ENCODE measurements at regions of chr18 and their contacts with region 1.

Region 1: DNA sequence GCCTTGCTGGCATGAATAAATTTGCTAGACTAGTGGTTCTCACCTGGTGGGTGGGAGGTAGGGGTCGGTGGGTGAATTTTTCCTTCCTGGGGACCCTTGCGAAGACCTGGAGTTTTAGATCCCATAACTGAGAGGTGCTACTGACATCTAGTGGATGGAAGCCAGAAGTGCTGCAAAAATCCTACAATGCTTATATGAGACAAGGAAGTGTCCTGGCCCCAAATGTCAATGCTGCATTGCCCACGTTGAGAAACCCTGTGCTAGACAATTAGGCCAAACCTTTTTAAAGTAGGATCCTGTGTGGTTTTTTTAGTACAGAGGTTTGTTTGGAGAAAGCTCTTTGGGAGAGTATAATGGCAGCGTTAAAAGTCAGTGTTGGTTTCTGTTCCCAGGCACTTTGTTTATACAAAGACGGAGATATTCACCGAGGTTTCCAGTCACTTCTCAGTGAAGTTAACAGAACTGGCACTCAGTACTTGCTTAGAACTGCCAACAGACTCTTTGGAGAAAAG is 9.6 kb downstream of the SERPINB8 start:
- DNase-seq: peak; percentile 48
- ATAC-seq: peak; percentile 56
- H3K4me3 Mint-ChIP-seq: no peak overlapping the region
- H3K27ac Mint-ChIP-seq: no peak overlapping the region
- H3K4me1 Mint-ChIP-seq: peaks cover 17% of the 10 kb centered on the region
- H3K27me3 Mint-ChIP-seq: no peaks in the 10 kb centered on the region

Region 2: DNA sequence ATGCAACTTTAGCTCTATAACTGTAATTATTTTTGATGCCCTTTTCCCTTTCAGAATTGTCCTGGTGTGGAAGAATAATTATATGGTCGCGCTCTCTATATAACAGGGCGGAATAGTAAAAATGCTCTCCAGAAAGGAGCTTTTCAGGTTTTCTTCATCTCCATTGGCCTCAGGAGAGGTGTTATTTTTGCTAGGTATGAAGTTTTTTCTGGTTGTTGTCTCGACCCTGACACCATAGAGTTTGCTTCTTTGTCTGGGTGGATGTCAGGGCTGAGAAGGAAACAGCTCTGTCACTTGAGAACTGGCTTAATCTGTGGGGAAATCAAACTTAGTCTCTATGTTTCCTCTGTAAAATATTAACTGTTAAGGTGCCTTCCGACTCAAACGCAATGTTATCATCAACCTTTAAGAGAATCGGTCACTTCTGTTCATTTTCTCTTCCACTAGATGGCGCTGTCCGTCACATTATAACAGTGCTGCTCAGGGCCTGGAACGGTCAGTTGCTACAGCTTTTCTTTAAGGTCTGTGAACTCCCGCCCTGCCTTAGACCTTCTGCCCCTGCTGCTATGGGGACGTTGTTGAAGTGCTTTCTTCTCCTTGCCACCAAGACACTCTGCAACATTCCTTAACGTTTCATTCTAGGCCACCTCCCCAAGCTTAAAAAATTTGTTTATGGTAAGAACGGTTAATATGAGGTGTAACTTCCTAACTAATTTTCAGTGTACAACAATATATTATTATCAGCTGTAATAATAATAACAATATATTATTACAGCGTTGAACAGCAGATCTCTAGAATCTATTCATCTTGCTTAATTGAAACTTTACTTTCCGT is 461.1 kb before region 1 on chr18:
- CTCF ChIA-PET with region 1: interaction called, 6 read pairs
- POLR2A ChIA-PET with region 1: no interaction called
- intact Hi-C with region 1: loop called (anchors 1 kb)
- DNase-seq: peak; percentile 71
- ATAC-seq: peak; percentile 91
- H3K4me3 Mint-ChIP-seq: no peak overlapping the region
- H3K27ac Mint-ChIP-seq: no peak overlapping the region
- H3K4me1 Mint-ChIP-seq: peaks cover 4% of the 10 kb centered on the region
- H3K27me3 Mint-ChIP-seq: peaks cover 9% of the 10 kb centered on the region

Region 3: GRCh38 chr18:63823518-63824219 is 155.8 kb before region 1 on chr18:
- CTCF ChIA-PET with region 1: no interaction called
- POLR2A ChIA-PET with region 1: no interaction called
- intact Hi-C with region 1: loop called (anchors 1 to 2 kb)
- DNase-seq: peak; percentile 69
- ATAC-seq: no peak
- H3K4me3 Mint-ChIP-seq: no peak overlapping the region
- H3K27ac Mint-ChIP-seq: no peak overlapping the region
- H3K4me1 Mint-ChIP-seq: no peaks in the 10 kb centered on the region
- H3K27me3 Mint-ChIP-seq: peaks cover 7% of the 10 kb centered on the region

Region 4: GRCh38 chr18:63890950-63891304 is 88.5 kb before region 1 on chr18:
- CTCF ChIA-PET with region 1: no interaction called
- POLR2A ChIA-PET with region 1: no interaction called
- intact Hi-C with region 1: loop called (anchors 1 to 5 kb)
- DNase-seq: no peak
- ATAC-seq: no peak
- H3K4me3 Mint-ChIP-seq: no peak overlapping the region
- H3K27ac Mint-ChIP-seq: no peak overlapping the region
- H3K4me1 Mint-ChIP-seq: peaks cover 4% of the 10 kb centered on the region
- H3K27me3 Mint-ChIP-seq: peaks cover 21% of the 10 kb centered on the region

Region 5: DNA sequence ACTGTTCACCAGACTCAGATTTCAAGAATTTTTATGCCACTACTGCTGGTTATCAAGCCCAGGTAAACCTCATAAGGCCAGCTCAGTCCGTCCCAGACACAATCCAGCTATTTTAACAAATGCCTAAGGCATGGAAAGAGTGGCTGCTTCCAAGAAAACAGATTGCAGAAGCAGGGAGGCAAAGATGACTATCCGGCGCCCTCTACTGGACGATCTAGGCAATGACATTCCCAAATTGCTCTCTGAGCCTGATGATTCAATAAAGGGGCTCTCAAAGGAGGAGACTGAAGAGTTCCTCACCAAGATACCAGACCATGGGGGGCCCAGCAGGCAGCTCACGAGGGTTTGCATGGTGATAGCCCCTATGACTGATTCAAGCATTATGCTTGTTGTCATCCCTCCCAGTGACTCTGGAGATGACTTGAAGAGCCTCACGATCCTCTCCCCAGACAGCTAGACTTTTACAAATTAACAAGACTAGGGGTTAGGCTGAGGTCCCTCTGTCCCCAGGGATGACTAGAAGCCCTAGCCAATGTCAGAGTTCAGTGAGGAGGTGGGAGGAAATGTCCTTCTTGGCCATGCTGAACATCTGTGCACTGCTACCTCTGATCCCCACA is 15.4 kb after region 1 on chr18:
- CTCF ChIA-PET with region 1: interaction called, 17 read pairs
- POLR2A ChIA-PET with region 1: no interaction called
- intact Hi-C with region 1: no loop called
- DNase-seq: peak; percentile 56
- ATAC-seq: peak; percentile 23
- H3K4me3 Mint-ChIP-seq: no peak overlapping the region
- H3K27ac Mint-ChIP-seq: no peak overlapping the region
- H3K4me1 Mint-ChIP-seq: peaks cover 5% of the 10 kb centered on the region
- H3K27me3 Mint-ChIP-seq: no peaks in the 10 kb centered on the region